Dendritic cell treated with granulocyte-macrophage colony-stimulating factor and Interleukin-4, amounts not matched to agents 40 ng/mL and 50 ng/mL, for 4 days (primary cell): ENCODE measurements at regions of chr14 and their contacts with region 1.

Region 1: DNA sequence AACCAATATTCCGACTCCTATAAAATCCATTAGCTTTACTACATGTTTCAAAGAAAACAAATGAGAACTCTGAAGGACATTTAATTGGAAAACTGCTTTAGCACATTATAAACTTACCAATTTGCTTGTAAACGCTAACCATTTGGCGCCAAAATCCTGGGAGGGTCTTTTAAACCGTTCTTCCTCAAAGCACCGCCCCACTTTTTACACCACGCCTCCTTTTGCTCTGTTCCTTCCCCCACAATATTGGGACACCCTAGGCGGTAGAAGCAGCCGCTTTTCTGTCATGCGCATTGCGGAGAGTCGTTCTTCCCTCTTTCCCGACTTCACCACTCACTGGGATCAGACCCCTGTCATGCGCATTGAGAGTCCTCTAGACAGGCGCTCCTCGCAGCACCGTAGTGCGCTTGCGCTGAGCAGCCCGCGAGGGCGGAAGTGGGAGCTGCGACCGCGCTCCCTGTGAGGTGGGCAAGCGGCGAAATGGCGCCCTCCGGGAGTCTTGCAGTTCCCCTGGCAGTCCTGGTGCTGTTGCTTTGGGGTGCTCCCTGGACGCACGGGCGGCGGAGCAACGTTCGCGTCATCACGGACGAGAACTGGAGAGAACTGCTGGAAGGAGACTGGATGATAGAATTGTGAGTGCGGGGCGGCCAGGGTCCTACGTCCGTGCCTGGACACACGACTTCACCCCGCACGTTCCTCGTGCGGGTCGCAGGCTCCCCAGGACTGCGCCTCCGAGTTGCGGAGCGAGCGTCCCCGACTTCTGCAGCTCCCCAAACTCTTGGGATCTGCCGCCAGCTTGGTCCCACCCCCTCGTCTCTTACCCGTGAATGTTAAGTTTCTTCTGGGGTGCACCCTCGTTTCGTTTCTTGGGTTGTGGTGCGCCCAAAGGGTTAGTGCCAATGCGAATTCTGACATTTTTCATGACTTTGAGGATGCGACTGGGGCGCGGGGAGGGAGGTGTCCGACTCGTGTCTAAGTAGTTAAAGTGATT is at the start of gene TMX1:
- H3K4me3 Mint-ChIP-seq: no peak within 1 kb of the TSS
- H3K27ac Mint-ChIP-seq: no peak within 1 kb of the TSS
- H3K4me1 Mint-ChIP-seq: peaks cover 18% of the 10 kb centered on the region
- H3K27me3 Mint-ChIP-seq: no peaks in the 10 kb centered on the region

Region 2: GRCh38 chr14:50943943-50944646 is 296.0 kb before region 1 on chr14 and contains the start of gene PYGL:
- intact Hi-C with region 1: loop called (anchors 2 kb)
- H3K4me3 Mint-ChIP-seq: peak within 1 kb of the TSS; percentile 92
- H3K27ac Mint-ChIP-seq: peak within 1 kb of the TSS; percentile 94
- H3K4me1 Mint-ChIP-seq: peaks cover 34% of the 10 kb centered on the region
- H3K27me3 Mint-ChIP-seq: no peaks in the 10 kb centered on the region